ENCODE measurements at regions of chr3 and their contacts with region 1.

Region 1: GRCh38 chr3:155870133-155870944 is at the start of gene GMPS:
- DNase-seq: peak; percentile 87 to 98 (median 96)
- ATAC-seq: peak; percentile 97
- H3K4me3 ChIP-seq: peak within 1 kb of the TSS; percentile 90
- H3K4me3 Mint-ChIP-seq: peak within 1 kb of the TSS; percentile 92 to 100 (median 98)
- H3K27ac ChIP-seq: peak within 1 kb of the TSS; percentile 94
- H3K27ac Mint-ChIP-seq: peak within 1 kb of the TSS; percentile 89 to 97 (median 96)
- H3K4me1 ChIP-seq: peaks cover 8% of the 10 kb centered on the region in 2 donors
- H3K4me1 Mint-ChIP-seq: peaks cover 17 to 35% (median 26%) of the 10 kb centered on the region in 7 donors
- H3K27me3 ChIP-seq: no peaks in the 10 kb centered on the region
- H3K27me3 Mint-ChIP-seq: no peaks in the 10 kb centered on the region
- total RNA-seq, gene GMPS: 36.3 to 85.1 (median 45.4) TPM

Region 2: GRCh38 chr3:154323891-154324738 is 1546.2 kb before region 1 on chr3 and contains the start of gene DHX36:
- CTCF ChIA-PET with region 1: no interaction called
- POLR2A ChIA-PET with region 1: interaction called, 3 read pairs
- intact Hi-C with region 1: loop called in 1 of 2 experiments (anchors 5 kb)
- DNase-seq: peak; percentile 73 to 92 (median 89)
- ATAC-seq: peak; percentile 94
- H3K4me3 ChIP-seq: peak within 1 kb of the TSS; percentile 70
- H3K4me3 Mint-ChIP-seq: peak within 1 kb of the TSS in 5 of 10 donors; percentile 92 to 96 (median 96)
- H3K27ac ChIP-seq: peak within 1 kb of the TSS; percentile 94
- H3K27ac Mint-ChIP-seq: peak within 1 kb of the TSS in 8 of 9 donors; percentile 96 to 100 (median 99)
- H3K4me1 ChIP-seq: peaks cover 38 to 43% of the 10 kb centered on the region in 2 donors
- H3K4me1 Mint-ChIP-seq: peaks cover 4 to 23% (median 20%) of the 10 kb centered on the region in 7 donors
- H3K27me3 ChIP-seq: no peaks in the 10 kb centered on the region
- H3K27me3 Mint-ChIP-seq: peaks cover 0 to under 1% (median 0%) of the 10 kb centered on the region in 5 donors
- total RNA-seq, gene DHX36: 73.4 to 101 (median 91.3) TPM

Region 3: DNA sequence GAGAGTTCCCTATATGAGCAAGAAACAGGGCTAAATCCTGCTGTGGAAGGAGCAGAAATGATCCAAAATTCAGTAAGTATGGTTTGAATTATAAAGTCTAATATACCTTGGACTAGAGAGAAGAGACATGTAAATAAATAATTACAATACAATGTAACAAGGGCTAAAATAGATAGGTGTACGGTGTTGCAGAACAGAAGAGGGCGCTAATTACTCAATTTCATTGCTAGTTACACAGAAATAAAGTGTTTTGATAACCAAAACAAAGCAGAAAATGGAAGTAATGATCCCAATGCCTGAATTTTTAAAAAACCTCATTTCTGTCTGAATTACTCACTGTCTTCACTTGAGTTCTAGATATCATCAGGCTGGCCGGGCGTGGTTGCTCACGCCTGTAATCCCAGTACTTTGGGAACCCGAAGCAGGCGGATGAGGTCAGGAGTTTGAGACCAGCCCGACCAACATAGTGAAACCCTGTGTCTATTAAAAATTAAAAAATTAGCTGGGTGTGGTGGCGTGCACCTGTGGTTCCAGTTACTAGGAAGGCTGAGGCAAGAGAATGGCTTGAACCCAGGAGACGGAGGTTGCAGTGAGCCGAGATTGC is 117.2 kb before region 1 on chr3:
- CTCF ChIA-PET with region 1: interaction called, 6 read pairs
- POLR2A ChIA-PET with region 1: no interaction called
- intact Hi-C with region 1: loop called in 1 of 2 experiments (anchors 2 kb)
- DNase-seq: peak in 3 of 9 donors; percentile 4 to 20 (median 9)
- ATAC-seq: peak; percentile 40
- H3K4me3 ChIP-seq: no peak overlapping the region
- H3K4me3 Mint-ChIP-seq: no peak overlapping the region
- H3K27ac ChIP-seq: no peak overlapping the region
- H3K27ac Mint-ChIP-seq: peak overlapping the region in 1 of 9 donors; percentile 18
- H3K4me1 ChIP-seq: no peaks in the 10 kb centered on the region
- H3K4me1 Mint-ChIP-seq: no peaks in the 10 kb centered on the region
- H3K27me3 ChIP-seq: no peaks in the 10 kb centered on the region
- H3K27me3 Mint-ChIP-seq: peaks cover 0 to 7% (median 0%) of the 10 kb centered on the region in 5 donors

Region 4: DNA sequence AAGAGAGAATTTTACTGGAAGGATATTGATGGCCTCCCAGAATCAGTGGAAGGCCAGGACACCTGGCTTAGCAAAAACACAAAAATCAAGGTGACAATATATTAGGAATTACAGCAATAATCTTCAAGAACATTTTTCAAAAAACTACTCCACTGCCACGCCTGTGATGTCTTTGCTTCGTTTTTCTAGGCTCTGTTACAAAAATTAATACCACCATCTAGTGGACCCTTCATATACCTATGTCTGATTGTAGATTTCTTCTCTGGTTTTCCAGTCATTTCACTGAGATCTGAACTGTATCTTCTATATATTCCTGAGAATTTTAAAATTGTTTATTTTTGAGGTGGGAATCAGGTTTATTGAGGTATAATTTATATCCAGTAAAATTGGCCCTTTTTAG is 10.5 kb before region 1 on chr3:
- CTCF ChIA-PET with region 1: interaction called, 3 read pairs
- POLR2A ChIA-PET with region 1: interaction called, 4 read pairs
- intact Hi-C with region 1: loop called in 1 of 2 experiments (anchors 1 kb)
- DNase-seq: peak in 2 of 9 donors; percentile 18
- ATAC-seq: peak; percentile 46
- H3K4me3 ChIP-seq: no peak overlapping the region
- H3K4me3 Mint-ChIP-seq: no peak overlapping the region
- H3K27ac ChIP-seq: no peak overlapping the region
- H3K27ac Mint-ChIP-seq: no peak overlapping the region
- H3K4me1 ChIP-seq: peaks cover 3% of the 10 kb centered on the region in 2 donors
- H3K4me1 Mint-ChIP-seq: peaks cover 2 to 36% (median 15%) of the 10 kb centered on the region in 7 donors
- H3K27me3 ChIP-seq: no peaks in the 10 kb centered on the region
- H3K27me3 Mint-ChIP-seq: peaks cover 0 to 3% (median 0%) of the 10 kb centered on the region in 5 donors

Region 5: GRCh38 chr3:157088601-157089454 is 1218.5 kb after region 1 on chr3:
- CTCF ChIA-PET with region 1: no interaction called
- POLR2A ChIA-PET with region 1: no interaction called
- intact Hi-C with region 1: loop called in 1 of 2 experiments (anchors 5 kb)
- DNase-seq: peak; percentile 90 to 97 (median 93)
- ATAC-seq: peak; percentile 95
- H3K4me3 ChIP-seq: peak overlapping the region; percentile 84
- H3K4me3 Mint-ChIP-seq: peak overlapping the region; percentile 81 to 89 (median 87)
- H3K27ac ChIP-seq: peak overlapping the region; percentile 83
- H3K27ac Mint-ChIP-seq: peak overlapping the region; percentile 92 to 98 (median 96)
- H3K4me1 ChIP-seq: peaks cover 11 to 30% of the 10 kb centered on the region in 2 donors
- H3K4me1 Mint-ChIP-seq: peaks cover 11 to 79% (median 23%) of the 10 kb centered on the region in 7 donors
- H3K27me3 ChIP-seq: no peaks in the 10 kb centered on the region
- H3K27me3 Mint-ChIP-seq: peaks cover 0 to 6% (median 0%) of the 10 kb centered on the region in 5 donors

Measured in naive thymus-derived CD4-positive, alpha-beta T cell (primary cell).